Esophagus muscularis mucosa (tissue), 4 donors: ENCODE measurements at regions of chr7 and their contacts with region 1.

Region 1: DNA sequence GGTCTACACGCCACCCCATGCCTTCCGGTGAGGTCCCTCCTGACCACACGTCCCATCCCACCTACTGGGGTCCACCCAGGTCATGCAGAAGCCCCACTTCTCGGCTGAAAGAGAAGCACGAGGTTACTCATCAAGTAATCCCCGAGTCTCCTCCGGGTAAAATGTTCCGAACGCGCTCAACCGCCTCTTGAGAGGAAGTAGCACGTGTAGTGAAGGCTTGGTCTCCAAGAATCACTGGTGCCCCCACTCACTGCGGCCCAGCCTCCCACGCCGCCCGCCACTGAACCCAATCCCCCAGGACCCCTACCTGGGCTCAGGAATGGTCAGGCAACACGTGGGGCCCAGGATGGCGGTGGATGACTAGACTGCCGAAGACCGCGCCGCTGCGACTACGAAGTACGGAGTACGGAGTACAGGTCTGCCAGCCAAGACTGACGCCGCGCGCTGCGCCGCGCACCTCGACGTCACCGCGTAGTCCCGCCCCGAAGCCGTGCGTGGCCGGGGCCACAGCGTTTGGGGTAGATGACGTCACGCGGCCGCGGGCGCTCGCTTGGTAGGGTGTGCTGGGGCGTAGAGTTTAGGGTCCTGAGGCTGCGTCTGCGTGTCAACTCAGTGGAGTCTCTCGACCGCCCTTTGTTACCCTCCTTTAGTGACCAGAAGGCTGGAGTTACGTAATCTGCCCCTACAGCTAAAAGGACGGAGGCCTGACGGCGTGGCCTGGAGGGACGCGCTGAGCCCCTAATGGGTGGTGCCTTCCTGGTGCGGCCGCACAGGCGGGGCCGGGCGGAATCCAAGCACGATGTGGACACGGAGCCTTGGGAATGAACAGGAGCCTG is 7.6 kb upstream of the MYO1G start:
- DNase-seq: peak; percentile 99
- H3K4me3 ChIP-seq: peak overlapping the region; percentile 60 to 69 (median 64)
- H3K27ac ChIP-seq: peak overlapping the region; percentile 89 to 96 (median 94)
- H3K4me1 ChIP-seq: peaks cover 13 to 37% (median 31%) of the 10 kb centered on the region in 4 donors
- H3K27me3 ChIP-seq: no peaks in the 10 kb centered on the region
- CTCF ChIP-seq: no peak
- EP300 ChIP-seq: peak; percentile 25
- POLR2A ChIP-seq: peak; percentile 88

Region 2: GRCh38 chr7:44581879-44582603 is 404.4 kb before region 1 on chr7 and contains the start of gene TMED4:
- intact Hi-C with region 1: loop called (anchors 10 kb)
- DNase-seq: peak; percentile 100
- H3K4me3 ChIP-seq: peak within 1 kb of the TSS; percentile 82 to 97 (median 84)
- H3K27ac ChIP-seq: peak within 1 kb of the TSS; percentile 94 to 98 (median 96)
- H3K4me1 ChIP-seq: peaks cover 16 to 32% (median 28%) of the 10 kb centered on the region in 4 donors
- H3K27me3 ChIP-seq: no peaks in the 10 kb centered on the region
- CTCF ChIP-seq: peak in 1 of 3 experiments; percentile 27
- EP300 ChIP-seq: no peak
- POLR2A ChIP-seq: peak; percentile 82
- total RNA-seq, gene TMED4: 82.3 to 154 (median 116) TPM

Region 3: GRCh38 chr7:44769776-44770662 is 216.4 kb before region 1 on chr7:
- intact Hi-C with region 1: no loop called
- DNase-seq: no peak
- H3K4me3 ChIP-seq: peak overlapping the region; percentile 21 to 36 (median 32)
- H3K27ac ChIP-seq: peak overlapping the region; percentile 77 to 83 (median 80)
- H3K4me1 ChIP-seq: peaks cover 36 to 45% (median 43%) of the 10 kb centered on the region in 4 donors
- H3K27me3 ChIP-seq: no peaks in the 10 kb centered on the region
- CTCF ChIP-seq: no peak
- EP300 ChIP-seq: no peak
- POLR2A ChIP-seq: no peak

Region 4: GRCh38 chr7:45111298-45112223 is 125.1 kb after region 1 on chr7 and contains the start of gene TBRG4:
- intact Hi-C with region 1: loop called (anchors 5 kb)
- DNase-seq: peak; percentile 98
- H3K4me3 ChIP-seq: peak within 1 kb of the TSS; percentile 68 to 85 (median 79)
- H3K27ac ChIP-seq: peak within 1 kb of the TSS; percentile 91 to 95 (median 92)
- H3K4me1 ChIP-seq: peaks cover 40 to 53% (median 50%) of the 10 kb centered on the region in 4 donors
- H3K27me3 ChIP-seq: no peaks in the 10 kb centered on the region
- CTCF ChIP-seq: peak; percentile 30 to 46 (median 36)
- EP300 ChIP-seq: no peak
- POLR2A ChIP-seq: peak; percentile 73
- total RNA-seq, gene TBRG4: 45.7 to 60.1 (median 53.7) TPM